ENCODE measurements at regions of chr4 and their contacts with region 1.

Region 1: GRCh38 chr4:118684873-118685811 is at the start of gene METTL14:
- DNase-seq: peak; percentile 83
- ATAC-seq: peak; percentile 89
- H3K4me3 ChIP-seq: peak within 1 kb of the TSS; percentile 94
- H3K27ac ChIP-seq: peak within 1 kb of the TSS; percentile 33
- H3K4me1 ChIP-seq: peaks cover 8% of the 10 kb centered on the region; the same call in 1 of the 2 replicates
- H3K27me3 ChIP-seq: no peaks in the 10 kb centered on the region
- CTCF ChIP-seq: no peak
- total RNA-seq, gene METTL14: 9.5 and 15.4 TPM in 2 replicates

Region 2: GRCh38 chr4:118417325-118417724 is 267.8 kb before region 1 on chr4:
- CTCF ChIA-PET with region 1: no interaction called
- POLR2A ChIA-PET with region 1: no interaction called
- intact Hi-C with region 1: loop called (anchors 10 kb)
- DNase-seq: no peak
- ATAC-seq: no peak
- H3K4me3 ChIP-seq: no peak overlapping the region
- H3K27ac ChIP-seq: no peak overlapping the region
- H3K4me1 ChIP-seq: no peaks in the 10 kb centered on the region
- H3K27me3 ChIP-seq: no peaks in the 10 kb centered on the region
- CTCF ChIP-seq: no peak

Region 3: DNA sequence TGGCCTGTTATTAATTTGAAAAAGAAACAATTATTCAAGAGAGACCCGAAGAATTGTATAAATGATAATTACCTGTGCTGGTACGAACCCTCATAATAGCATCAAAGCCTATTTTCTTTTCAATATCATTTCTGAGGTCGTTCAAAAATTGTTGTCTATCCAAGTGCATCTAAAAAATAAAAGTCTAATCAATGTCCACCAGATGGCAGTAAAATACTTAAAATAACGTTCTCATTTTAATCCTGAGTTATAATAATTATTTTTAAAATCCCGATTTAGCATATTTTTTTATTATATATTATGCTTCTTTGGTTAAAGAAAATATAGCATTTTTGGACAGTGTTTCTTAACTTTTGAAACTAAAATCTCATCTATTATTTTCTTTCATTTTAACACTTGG is 55.7 kb after region 1 on chr4:
- CTCF ChIA-PET with region 1: no interaction called
- POLR2A ChIA-PET with region 1: no interaction called
- intact Hi-C with region 1: no loop called
- DNase-seq: peak; percentile 36
- ATAC-seq: no peak
- H3K4me3 ChIP-seq: no peak overlapping the region
- H3K27ac ChIP-seq: no peak overlapping the region
- H3K4me1 ChIP-seq: no peaks in the 10 kb centered on the region
- H3K27me3 ChIP-seq: no peaks in the 10 kb centered on the region
- CTCF ChIP-seq: peak; percentile 47; the same call in 1 of the 2 replicates

Region 4: GRCh38 chr4:118783887-118784286 is 98.7 kb after region 1 on chr4:
- CTCF ChIA-PET with region 1: no interaction called
- POLR2A ChIA-PET with region 1: no interaction called
- intact Hi-C with region 1: no loop called
- DNase-seq: no peak
- ATAC-seq: no peak
- H3K4me3 ChIP-seq: no peak overlapping the region
- H3K27ac ChIP-seq: no peak overlapping the region
- H3K4me1 ChIP-seq: no peaks in the 10 kb centered on the region
- H3K27me3 ChIP-seq: no peaks in the 10 kb centered on the region
- CTCF ChIP-seq: no peak

Region 5: GRCh38 chr4:118835571-118836300 is 150.6 kb after region 1 on chr4 and contains the start of gene SEC24D:
- CTCF ChIA-PET with region 1: no interaction called
- POLR2A ChIA-PET with region 1: no interaction called
- intact Hi-C with region 1: no loop called
- DNase-seq: peak; percentile 83
- ATAC-seq: peak; percentile 78
- H3K4me3 ChIP-seq: peak within 1 kb of the TSS; percentile 84
- H3K27ac ChIP-seq: peak within 1 kb of the TSS; percentile 80
- H3K4me1 ChIP-seq: peaks cover 21% of the 10 kb centered on the region
- H3K27me3 ChIP-seq: no peaks in the 10 kb centered on the region
- CTCF ChIP-seq: no peak
- total RNA-seq, gene SEC24D: 14.4 and 18.4 TPM in 2 replicates

Region 6: GRCh38 chr4:119204916-119205315 is 519.8 kb after region 1 on chr4:
- CTCF ChIA-PET with region 1: no interaction called
- POLR2A ChIA-PET with region 1: no interaction called
- intact Hi-C with region 1: no loop called
- DNase-seq: peak; percentile 32
- ATAC-seq: no peak
- H3K4me3 ChIP-seq: no peak overlapping the region
- H3K27ac ChIP-seq: no peak overlapping the region
- H3K4me1 ChIP-seq: peaks cover 20% of the 10 kb centered on the region
- H3K27me3 ChIP-seq: no peaks in the 10 kb centered on the region
- CTCF ChIP-seq: no peak